ENCODE measurements at regions of chr14 and their contacts with region 1.

Region 1: DNA sequence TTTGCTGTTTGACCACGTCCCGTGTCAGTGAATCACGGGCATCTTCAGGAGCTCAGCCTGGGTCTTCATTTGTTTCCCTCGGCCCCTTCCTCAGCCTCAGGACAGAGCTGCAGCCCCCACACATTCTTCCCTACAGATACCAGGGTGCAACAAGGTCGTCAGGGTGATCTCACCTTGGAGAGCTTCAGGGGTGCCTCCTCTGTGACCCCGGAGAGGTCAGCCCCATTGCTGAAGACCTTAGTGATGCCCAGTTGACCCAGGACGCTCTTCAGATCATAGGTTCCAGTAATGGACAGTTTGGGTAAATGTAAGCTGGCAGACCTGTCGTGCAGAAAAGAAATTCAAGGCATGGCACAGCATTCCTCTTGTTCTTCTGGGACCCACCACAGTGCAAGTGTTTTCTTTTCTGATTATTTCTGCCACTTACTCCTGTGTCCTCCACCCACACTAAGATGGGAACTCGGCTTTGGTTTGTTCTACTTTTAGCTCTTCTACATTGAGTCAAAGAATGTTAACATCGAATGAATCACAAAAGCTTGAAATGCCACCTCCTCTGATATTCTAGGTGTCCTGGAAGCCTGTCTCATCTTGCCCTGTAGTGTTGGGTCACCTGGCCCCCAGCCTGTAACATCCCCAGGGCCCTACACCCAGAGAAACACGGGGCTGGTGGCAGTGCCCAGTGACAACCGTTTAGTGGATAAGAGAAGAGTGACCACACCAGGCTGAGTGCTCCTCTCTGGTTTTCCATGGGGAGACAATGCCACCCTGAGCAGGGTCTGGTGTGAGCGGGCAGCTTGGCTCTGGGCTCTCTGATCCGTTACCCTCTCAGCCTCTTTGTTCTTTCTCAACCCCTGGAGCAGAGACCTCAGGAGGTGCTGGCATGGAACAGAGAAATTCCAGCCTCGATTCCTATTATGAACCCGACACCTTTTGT is 8.8 kb downstream of the SERPINA1 start:
- DNase-seq: no peak
- ATAC-seq: no peak
- H3K4me3 ChIP-seq: no peak overlapping the region
- H3K27ac ChIP-seq: no peak overlapping the region
- H3K4me1 ChIP-seq: no peaks in the 10 kb centered on the region
- H3K27me3 ChIP-seq: no peaks in the 10 kb centered on the region
- CTCF ChIP-seq: no peak
- POLR2A ChIP-seq: no peak

Region 2: GRCh38 chr14:94317259-94317658 is 62.3 kb before region 1 on chr14:
- in situ Hi-C with region 1: no loop called
- intact Hi-C with region 1: no loop called
- DNase-seq: peak; percentile 12 to 28
- ATAC-seq: no peak
- H3K4me3 ChIP-seq: no peak overlapping the region
- H3K27ac ChIP-seq: no peak overlapping the region
- H3K4me1 ChIP-seq: no peaks in the 10 kb centered on the region
- H3K27me3 ChIP-seq: no peaks in the 10 kb centered on the region
- CTCF ChIP-seq: no peak
- POLR2A ChIP-seq: no peak

Region 3: GRCh38 chr14:94364037-94364436 is 15.5 kb before region 1 on chr14:
- in situ Hi-C with region 1: no loop called
- intact Hi-C with region 1: loop called (anchors 1 kb)
- DNase-seq: no peak
- ATAC-seq: no peak
- H3K4me3 ChIP-seq: no peak overlapping the region
- H3K27ac ChIP-seq: no peak overlapping the region
- H3K4me1 ChIP-seq: no peaks in the 10 kb centered on the region
- H3K27me3 ChIP-seq: no peaks in the 10 kb centered on the region
- CTCF ChIP-seq: no peak
- POLR2A ChIP-seq: no peak